ENCODE measurements at regions of chr3 and their contacts with region 1.

Region 1: DNA sequence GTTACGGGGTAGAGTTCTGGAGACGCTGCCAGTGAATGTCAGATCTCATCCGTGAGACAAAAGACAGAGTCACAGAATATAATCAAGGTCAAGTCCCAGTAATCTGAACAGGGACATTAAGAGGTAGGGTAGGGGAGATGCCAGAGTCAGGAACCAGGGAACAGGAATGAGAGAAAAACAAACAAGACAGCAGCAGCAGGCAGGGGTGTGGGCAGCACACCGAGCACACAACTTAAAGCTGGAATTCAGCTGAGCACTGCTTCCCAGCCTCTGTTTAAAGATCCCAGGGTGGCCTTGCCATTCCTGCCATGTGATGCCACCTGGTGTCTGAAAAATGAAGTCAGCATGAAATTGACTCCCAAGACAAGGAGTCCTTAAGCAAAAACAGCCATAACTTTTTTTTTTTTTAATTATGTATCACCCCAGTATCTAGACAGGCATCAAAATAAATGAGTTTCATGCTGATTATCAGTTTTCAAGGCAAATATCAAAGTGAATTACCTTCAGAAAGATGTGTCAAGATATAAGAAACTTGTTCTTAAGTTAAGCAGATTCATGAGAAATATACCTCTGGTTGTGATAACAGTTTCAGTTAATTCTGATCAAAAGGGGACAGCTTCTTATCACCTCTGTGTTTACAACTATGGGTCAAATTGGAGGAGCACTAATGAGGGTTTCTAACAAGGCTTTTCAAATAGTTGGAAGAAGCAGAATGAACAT is 203.7 kb downstream of the SLC9A9 start:
- DNase-seq: peak; percentile 33
- ATAC-seq: peak; percentile 70
- H3K4me3 ChIP-seq: no peak overlapping the region
- H3K27ac ChIP-seq: no peak overlapping the region
- H3K4me1 ChIP-seq: no peaks in the 10 kb centered on the region
- H3K27me3 ChIP-seq: 0 out of 2 replicates have a peak, but pooled peaks cover 2% of the 10 kb centered on the region
- CTCF ChIP-seq: peak; percentile 72

Region 2: DNA sequence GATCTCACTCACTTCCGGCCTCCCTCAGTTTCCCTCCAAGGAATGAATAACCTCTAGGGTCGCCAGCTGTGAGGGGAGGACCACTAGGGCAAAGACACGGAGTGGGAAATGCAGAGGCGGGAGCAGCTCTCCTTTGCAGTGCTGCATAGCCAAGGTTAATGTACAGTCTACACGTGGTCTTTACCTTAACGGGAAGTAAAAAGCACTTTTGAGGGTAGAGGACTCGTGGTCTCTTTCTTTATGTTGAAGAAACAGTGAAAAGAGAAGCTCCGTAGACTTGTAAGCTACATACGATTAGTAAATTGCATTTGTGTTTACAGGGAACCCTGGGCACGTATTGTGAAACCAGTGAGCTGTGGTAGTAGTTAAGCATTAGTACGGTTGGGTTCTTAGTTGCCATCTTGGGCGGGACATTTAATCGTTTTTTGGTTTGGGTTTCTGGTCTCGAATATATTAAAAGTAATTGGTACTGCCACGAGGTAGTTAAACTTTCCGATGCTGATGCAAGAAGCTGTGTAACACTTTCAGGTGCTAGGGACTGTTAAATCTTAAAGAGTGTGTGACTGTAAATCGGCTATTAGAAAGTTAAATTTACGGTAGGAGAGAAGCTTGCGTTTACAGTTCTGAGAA is 642.3 kb before region 1 on chr3:
- CTCF ChIA-PET with region 1: no interaction called
- POLR2A ChIA-PET with region 1: interaction called, 10 read pairs
- in situ Hi-C with region 1: no loop called
- intact Hi-C with region 1: no loop called
- DNase-seq: no peak
- ATAC-seq: peak; percentile 35
- H3K4me3 ChIP-seq: peak overlapping the region; percentile 96 to 97
- H3K27ac ChIP-seq: peak overlapping the region; percentile 99
- H3K4me1 ChIP-seq: peaks cover 48% of the 10 kb centered on the region
- H3K27me3 ChIP-seq: no peaks in the 10 kb centered on the region
- CTCF ChIP-seq: no peak

Region 3: GRCh38 chr3:143482106-143483088 is 162.1 kb before region 1 on chr3:
- CTCF ChIA-PET with region 1: no interaction called
- POLR2A ChIA-PET with region 1: no interaction called
- in situ Hi-C with region 1: no loop called
- intact Hi-C with region 1: no loop called
- DNase-seq: no peak
- ATAC-seq: no peak
- H3K4me3 ChIP-seq: no peak overlapping the region
- H3K27ac ChIP-seq: no peak overlapping the region
- H3K4me1 ChIP-seq: no peaks in the 10 kb centered on the region; the same call in 1 of the 2 replicates
- H3K27me3 ChIP-seq: no peaks in the 10 kb centered on the region
- CTCF ChIP-seq: no peak

Region 4: DNA sequence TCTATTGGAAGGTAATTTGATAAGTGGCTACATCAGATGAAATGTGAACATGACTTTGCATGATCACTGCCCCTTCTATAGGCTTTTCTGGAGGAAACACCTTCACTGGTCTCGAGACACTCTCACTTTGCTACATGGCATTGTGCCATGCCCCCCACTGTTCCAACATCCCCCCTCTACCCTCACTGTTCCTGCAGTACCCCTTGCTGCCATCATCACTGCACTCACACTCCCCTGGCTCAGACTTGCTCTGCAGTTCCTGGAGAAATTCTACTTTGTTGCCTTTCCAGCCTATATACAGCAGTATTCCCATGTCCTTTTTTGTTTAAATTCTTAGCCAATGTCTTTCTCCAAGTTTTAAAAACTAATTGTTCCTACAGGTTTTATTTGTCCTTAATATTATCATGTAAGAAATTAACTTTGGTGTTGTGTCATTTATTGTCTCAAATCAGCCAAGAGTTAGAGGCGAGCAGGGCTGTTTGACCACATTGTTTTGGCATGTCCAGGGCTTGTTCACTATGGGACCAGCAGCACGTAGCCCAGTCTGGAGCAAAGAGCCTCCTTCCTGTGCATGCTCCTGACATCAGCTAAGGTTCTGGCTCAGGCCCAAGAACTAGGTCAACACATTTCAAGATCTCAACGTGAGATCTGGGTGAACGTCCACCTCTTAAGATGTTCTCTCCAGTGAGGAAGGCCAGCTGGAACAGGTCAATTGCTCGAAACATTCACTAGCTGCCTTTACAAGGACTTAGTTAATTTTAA is 42.6 kb before region 1 on chr3:
- CTCF ChIA-PET with region 1: no interaction called
- POLR2A ChIA-PET with region 1: no interaction called
- in situ Hi-C with region 1: no loop called
- intact Hi-C with region 1: no loop called
- DNase-seq: no peak
- ATAC-seq: no peak
- H3K4me3 ChIP-seq: no peak overlapping the region
- H3K27ac ChIP-seq: no peak overlapping the region
- H3K4me1 ChIP-seq: no peaks in the 10 kb centered on the region
- H3K27me3 ChIP-seq: no peaks in the 10 kb centered on the region
- CTCF ChIP-seq: no peak

Measured in Panc1 (cell line).